Ovary (tissue), 10 donors: ENCODE measurements at regions of chr1 and their contacts with region 1.

Region 1: GRCh38 chr1:154404984-154405761 is at the start of gene IL6R:
- DNase-seq: peak; percentile 89 to 96 (median 91)
- H3K4me3 ChIP-seq: peak within 1 kb of the TSS; percentile 69
- H3K27ac ChIP-seq: peak within 1 kb of the TSS; percentile 89 to 96
- H3K4me1 ChIP-seq: peaks cover 17% of the 10 kb centered on the region
- H3K27me3 ChIP-seq: no peaks in the 10 kb centered on the region
- CTCF ChIP-seq: peak; percentile 39 to 79 (median 72)
- EP300 ChIP-seq: peak; percentile 88
- POLR2A ChIP-seq: peak; percentile 90
- total RNA-seq, gene IL6R: 7.5 to 37.0 (median 12.9) TPM

Region 2: DNA sequence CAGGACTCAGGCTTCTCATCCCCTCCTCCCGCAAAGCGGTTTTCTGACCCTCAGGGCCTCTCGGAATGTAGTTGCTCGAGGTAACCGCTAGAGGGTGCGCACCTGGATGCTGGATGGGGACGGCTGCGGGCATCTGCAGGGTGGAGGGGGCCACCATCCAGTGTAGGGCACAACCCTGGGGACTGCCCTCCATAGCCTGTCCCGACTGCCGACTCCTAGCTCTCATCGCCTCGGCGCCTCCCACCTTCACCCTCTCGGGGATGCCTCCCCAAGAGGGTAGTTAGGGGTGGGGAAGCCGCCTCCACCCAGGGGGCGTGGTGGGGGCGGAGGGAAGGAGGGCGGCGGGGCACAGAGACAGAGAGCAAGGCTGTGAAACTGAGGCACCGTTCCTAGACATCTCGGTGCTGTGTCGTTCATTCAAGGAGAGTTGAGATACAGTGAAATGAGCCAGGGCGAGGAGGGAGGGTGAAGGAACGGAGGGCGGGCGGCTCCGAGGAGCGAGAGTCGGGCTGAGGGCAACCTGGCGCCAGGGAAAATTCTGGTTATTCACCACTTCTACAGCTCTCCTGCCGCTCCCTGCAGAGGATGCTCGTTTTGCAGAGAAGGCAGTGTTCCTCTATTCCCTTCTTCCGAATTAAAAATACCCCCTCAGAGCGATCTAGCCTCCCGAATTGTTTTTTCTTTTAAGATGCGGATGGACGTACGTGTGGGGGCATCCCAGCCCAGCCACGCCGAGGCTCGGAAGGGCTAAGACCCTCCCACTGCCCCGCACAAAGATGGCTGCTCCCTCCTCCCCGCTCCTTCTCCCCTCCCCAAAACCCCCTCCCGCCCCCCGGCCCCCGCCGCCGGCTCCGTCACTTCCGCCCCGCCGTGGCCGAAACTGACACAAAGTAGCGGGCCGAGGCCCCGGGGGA is 80.2 kb before region 1 on chr1 and contains the start of gene ATP8B2:
- intact Hi-C with region 1: loop called in 1 of 4 experiments (anchors 5 kb)
- DNase-seq: peak; percentile 79 to 88 (median 87)
- H3K4me3 ChIP-seq: peak within 1 kb of the TSS; percentile 72
- H3K27ac ChIP-seq: peak within 1 kb of the TSS; percentile 94
- H3K4me1 ChIP-seq: peaks cover 17% of the 10 kb centered on the region
- H3K27me3 ChIP-seq: no peaks in the 10 kb centered on the region
- CTCF ChIP-seq: peak; percentile 79 to 90 (median 84)
- EP300 ChIP-seq: no peak
- POLR2A ChIP-seq: no peak
- total RNA-seq, gene ATP8B2: 59.7 to 112 (median 83.7) TPM

Region 3: DNA sequence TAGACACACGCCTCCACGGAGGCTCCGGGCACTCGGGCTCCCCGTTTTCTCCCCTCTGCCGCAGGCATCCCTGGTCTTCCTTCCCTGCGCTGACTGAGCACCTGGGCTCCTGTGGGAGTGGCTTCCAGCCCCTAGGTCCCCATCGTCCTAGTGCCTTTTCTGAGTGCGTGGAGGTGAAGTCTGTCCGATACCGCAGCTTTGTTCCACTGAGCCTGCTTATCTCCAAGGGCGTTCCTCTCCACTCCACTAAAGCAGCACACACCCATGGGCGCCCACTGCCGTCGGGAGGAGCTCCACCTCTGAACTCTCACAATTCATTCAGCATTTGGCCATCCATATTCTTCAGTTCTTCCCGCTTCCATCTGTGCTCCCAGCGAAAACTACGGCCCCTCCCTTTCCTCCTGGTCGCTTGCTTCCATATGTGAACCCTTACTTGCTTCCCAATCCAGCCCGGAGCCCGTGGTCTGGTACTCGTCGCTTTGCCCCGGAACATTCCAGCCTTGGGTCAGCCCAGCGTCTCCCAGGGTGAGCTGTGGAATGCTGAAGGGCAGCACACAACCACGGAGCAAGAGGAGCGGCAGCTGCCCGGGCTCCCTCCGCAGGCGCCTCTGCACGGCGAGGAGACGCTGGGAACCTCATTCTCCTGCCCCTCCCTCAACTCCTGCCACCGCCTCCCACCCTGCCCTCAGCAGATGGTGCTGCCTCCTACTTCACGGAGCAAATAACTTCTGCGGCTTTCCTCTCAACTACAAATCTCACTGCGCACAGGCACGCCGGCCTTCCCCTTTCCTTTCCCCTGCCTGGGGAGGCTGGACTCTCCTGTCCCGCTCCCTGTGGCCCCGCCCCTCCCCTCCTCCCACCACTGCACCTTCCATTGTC is 52.4 kb before region 1 on chr1:
- intact Hi-C with region 1: loop called in 1 of 4 experiments (anchors 10 kb)
- DNase-seq: peak; percentile 46 to 70 (median 51)
- H3K4me3 ChIP-seq: peak overlapping the region; percentile 32
- H3K27ac ChIP-seq: peak overlapping the region; percentile 39 to 49
- H3K4me1 ChIP-seq: peaks cover 12% of the 10 kb centered on the region
- H3K27me3 ChIP-seq: no peaks in the 10 kb centered on the region
- CTCF ChIP-seq: peak in 1 of 3 donors; percentile 5
- EP300 ChIP-seq: no peak
- POLR2A ChIP-seq: peak; percentile 3

Region 4: GRCh38 chr1:154463512-154463990 is 58.4 kb after region 1 on chr1:
- intact Hi-C with region 1: loop called in 2 of 4 experiments (anchors 10 kb)
- DNase-seq: peak in 1 of 5 donors; percentile 21
- H3K4me3 ChIP-seq: no peak overlapping the region
- H3K27ac ChIP-seq: no peak overlapping the region
- H3K4me1 ChIP-seq: peaks cover 4% of the 10 kb centered on the region
- H3K27me3 ChIP-seq: no peaks in the 10 kb centered on the region
- CTCF ChIP-seq: no peak
- EP300 ChIP-seq: no peak
- POLR2A ChIP-seq: no peak